ENCODE measurements at regions of chr5 and their contacts with region 1.

Region 1: GRCh38 chr5:120628156-120628555 is 164.1 kb downstream of the PRR16 start:
- DNase-seq: no peak
- H3K4me3 ChIP-seq: no peak overlapping the region
- CTCF ChIP-seq: no peak
- POLR2A ChIP-seq: no peak

Region 2: GRCh38 chr5:120991569-120991968 is 363.4 kb after region 1 on chr5:
- intact Hi-C with region 1: loop called (anchors 5 kb)
- DNase-seq: no peak
- H3K4me3 ChIP-seq: no peak overlapping the region
- CTCF ChIP-seq: no peak
- POLR2A ChIP-seq: no peak